ENCODE measurements at regions of chr2 and their contacts with region 1.

Region 1: DNA sequence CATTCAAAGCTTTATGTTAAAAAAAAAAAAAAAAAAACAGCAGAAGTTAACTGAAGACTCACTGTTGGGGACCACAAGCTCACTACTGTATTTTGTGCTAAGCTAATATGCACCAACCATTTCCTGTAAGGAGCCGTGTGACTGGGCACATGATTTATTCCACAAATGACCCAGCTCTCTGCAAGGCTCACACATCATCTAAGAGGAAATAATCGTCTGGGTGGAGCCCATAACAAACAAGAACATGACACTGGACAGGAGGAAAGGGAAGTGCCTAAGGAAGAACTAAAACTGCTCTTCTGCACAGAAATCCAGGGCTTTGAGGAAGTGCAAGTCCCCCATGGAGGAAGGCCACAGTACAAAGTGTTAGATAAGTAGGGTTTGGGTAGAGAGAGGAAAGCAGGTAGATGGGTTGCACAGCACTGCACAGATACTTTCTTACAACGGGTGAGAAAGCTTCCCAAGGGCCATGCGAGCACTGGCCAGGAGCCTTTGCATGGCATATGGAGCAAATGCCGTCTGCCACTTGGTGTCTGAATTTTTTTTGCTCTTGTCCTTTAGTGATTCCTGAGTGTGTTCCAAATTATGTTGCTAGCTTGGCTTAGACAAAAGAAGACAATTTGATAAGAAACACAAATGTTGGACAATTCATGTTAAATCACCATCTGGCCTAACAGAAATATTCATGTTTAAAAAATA is 24.4 kb downstream of the NFE2L2 start:
- DNase-seq: peak; percentile 18
- H3K4me3 Mint-ChIP-seq: peak overlapping the region; percentile 40
- H3K27ac Mint-ChIP-seq: peak overlapping the region; percentile 84
- H3K4me1 Mint-ChIP-seq: peaks cover 66% of the 10 kb centered on the region
- H3K27me3 Mint-ChIP-seq: no peaks in the 10 kb centered on the region

Region 2: GRCh38 chr2:177201919-177202346 is 38.1 kb before region 1 on chr2:
- intact Hi-C with region 1: no loop called
- DNase-seq: no peak
- H3K4me3 Mint-ChIP-seq: no peak overlapping the region
- H3K27ac Mint-ChIP-seq: no peak overlapping the region
- H3K4me1 Mint-ChIP-seq: peaks cover 5% of the 10 kb centered on the region
- H3K27me3 Mint-ChIP-seq: no peaks in the 10 kb centered on the region

Region 3: DNA sequence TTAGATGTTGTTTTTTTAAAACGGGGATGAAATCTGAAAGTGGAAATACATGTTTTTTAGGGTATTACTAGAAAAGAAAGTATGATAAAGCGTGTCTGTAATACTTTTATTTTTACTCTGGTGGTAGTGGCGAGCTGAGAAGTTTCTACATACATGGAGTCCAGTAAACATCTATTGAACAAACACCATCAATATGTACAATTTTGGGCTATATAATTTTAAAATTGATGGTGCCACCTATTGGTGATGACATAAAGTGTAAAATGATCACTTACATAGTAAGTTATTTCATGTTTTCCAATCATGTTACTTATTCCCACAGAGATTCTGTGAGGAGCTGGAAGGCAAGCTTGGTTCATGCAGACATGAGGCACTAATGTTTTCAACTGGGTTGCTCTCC is 56.0 kb after region 1 on chr2:
- intact Hi-C with region 1: loop called (anchors 10 kb)
- DNase-seq: no peak
- H3K4me3 Mint-ChIP-seq: no peak overlapping the region
- H3K27ac Mint-ChIP-seq: no peak overlapping the region
- H3K4me1 Mint-ChIP-seq: peaks cover 34% of the 10 kb centered on the region
- H3K27me3 Mint-ChIP-seq: no peaks in the 10 kb centered on the region

Measured in activated T-helper 2 cell treated with anti-CD3 and anti-CD28 coated beads, Interferon-gamma antibody, Interleukin-2, Interleukin-4, amounts not matched to agents 10 μg/mL and 5 μg/mL and 100 μg/mL, durations not matched to agents 14 hours and 24 hours and 36 hours (primary cell).